IMR-90 (cell line): ENCODE measurements at regions of chr15 and their contacts with region 1.

Region 1: GRCh38 chr15:62389885-62390790 is 225.1 kb upstream of the C2CD4B start:
- DNase-seq: peak; percentile 77
- ATAC-seq: peak; percentile 79
- H3K4me3 ChIP-seq: peak within 1 kb of the TSS; percentile 91
- H3K27ac ChIP-seq: peak within 1 kb of the TSS; percentile 81
- H3K4me1 ChIP-seq: peaks cover 6% of the 10 kb centered on the region
- H3K27me3 ChIP-seq: no peaks in the 10 kb centered on the region
- CTCF ChIP-seq: 0 out of 2 replicates have a peak, but pooled peaks have one; percentile 2
- POLR2A ChIP-seq: peak; percentile 92
- RAD21 ChIP-seq: peak; percentile 39

Region 2: DNA sequence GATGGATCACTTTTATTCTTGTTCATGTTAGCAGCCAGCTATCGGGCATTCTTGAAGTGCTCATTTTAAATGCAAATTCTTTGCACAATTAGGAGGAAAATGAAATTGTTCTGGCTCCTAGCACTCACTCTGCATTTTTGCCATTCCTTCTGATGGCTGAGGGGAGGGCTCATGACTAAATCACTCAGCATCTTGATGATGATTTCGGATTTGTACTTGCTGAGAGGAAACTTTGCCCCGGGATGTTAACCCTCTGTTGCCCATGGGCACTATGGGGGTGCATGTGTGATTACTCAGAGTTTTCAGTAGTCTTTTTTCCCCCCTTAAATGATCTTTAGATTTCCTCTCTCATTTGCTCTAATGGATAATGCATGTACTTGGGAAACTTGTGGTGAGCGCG is 74.6 kb after region 1 on chr15:
- CTCF ChIA-PET with region 1: interaction called, 7 read pairs
- POLR2A ChIA-PET with region 1: no interaction called
- dilution Hi-C with region 1: no loop called
- in situ Hi-C with region 1: no loop called
- intact Hi-C with region 1: loop called (anchors 2 kb)
- DNase-seq: peak; percentile 67
- ATAC-seq: peak; percentile 89
- H3K4me3 ChIP-seq: no peak overlapping the region
- H3K27ac ChIP-seq: no peak overlapping the region
- H3K4me1 ChIP-seq: peaks cover 16% of the 10 kb centered on the region
- H3K27me3 ChIP-seq: no peaks in the 10 kb centered on the region
- CTCF ChIP-seq: no peak
- POLR2A ChIP-seq: no peak
- RAD21 ChIP-seq: no peak

Region 3: DNA sequence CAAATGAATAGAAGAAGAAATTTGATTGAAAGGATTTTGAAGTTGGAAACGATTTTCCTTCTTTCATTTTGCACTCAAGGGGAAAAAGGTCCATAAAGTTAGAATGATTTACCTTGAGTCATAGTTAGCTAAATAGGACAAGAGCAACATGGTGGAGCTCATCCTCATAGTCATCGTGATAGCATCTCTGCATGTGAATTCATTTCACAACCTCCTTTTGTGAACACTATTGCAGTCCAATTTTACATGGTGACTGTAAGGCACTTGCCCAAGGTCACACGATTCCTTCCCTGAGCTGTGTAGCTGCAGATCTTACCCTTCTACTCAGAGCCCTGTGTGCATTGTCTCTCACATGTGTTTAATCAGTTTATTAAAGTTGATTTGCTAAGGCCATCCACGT is 134.7 kb after region 1 on chr15:
- CTCF ChIA-PET with region 1: interaction called, 7 read pairs
- POLR2A ChIA-PET with region 1: no interaction called
- dilution Hi-C with region 1: no loop called
- in situ Hi-C with region 1: no loop called
- intact Hi-C with region 1: loop called (anchors 5 kb)
- DNase-seq: peak; percentile 68
- ATAC-seq: no peak
- H3K4me3 ChIP-seq: no peak overlapping the region
- H3K27ac ChIP-seq: no peak overlapping the region
- H3K4me1 ChIP-seq: peaks cover 17% of the 10 kb centered on the region
- H3K27me3 ChIP-seq: no peaks in the 10 kb centered on the region
- CTCF ChIP-seq: no peak
- POLR2A ChIP-seq: no peak
- RAD21 ChIP-seq: no peak

Region 4: DNA sequence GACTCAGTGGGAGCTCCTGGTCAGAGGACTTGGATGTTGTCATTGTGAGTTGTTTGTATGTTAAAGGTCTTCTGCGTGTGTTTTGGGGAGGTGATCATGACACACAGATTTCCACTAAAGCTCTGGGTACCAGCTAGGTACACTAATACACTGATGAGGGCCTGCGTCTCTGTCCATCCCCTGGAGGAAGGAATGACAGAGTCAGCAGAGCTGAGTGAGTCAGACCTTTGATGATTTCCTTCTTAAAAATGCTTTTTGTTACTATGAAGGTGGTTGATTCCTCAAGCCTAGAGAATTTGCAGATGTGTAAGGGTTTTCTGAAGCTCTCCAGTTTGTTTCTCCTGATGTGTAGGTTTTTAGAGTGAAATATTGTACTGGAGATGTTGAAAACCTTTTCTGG is 228.3 kb after region 1 on chr15:
- CTCF ChIA-PET with region 1: interaction called, 4 read pairs
- POLR2A ChIA-PET with region 1: no interaction called
- dilution Hi-C with region 1: no loop called
- in situ Hi-C with region 1: no loop called
- intact Hi-C with region 1: loop called (anchors 5 kb)
- DNase-seq: peak; percentile 94
- ATAC-seq: peak; percentile 91
- H3K4me3 ChIP-seq: no peak overlapping the region
- H3K27ac ChIP-seq: no peak overlapping the region
- H3K4me1 ChIP-seq: peaks cover 17% of the 10 kb centered on the region
- H3K27me3 ChIP-seq: no peaks in the 10 kb centered on the region
- CTCF ChIP-seq: peak; percentile 65
- POLR2A ChIP-seq: no peak
- RAD21 ChIP-seq: peak; percentile 59

Region 5: DNA sequence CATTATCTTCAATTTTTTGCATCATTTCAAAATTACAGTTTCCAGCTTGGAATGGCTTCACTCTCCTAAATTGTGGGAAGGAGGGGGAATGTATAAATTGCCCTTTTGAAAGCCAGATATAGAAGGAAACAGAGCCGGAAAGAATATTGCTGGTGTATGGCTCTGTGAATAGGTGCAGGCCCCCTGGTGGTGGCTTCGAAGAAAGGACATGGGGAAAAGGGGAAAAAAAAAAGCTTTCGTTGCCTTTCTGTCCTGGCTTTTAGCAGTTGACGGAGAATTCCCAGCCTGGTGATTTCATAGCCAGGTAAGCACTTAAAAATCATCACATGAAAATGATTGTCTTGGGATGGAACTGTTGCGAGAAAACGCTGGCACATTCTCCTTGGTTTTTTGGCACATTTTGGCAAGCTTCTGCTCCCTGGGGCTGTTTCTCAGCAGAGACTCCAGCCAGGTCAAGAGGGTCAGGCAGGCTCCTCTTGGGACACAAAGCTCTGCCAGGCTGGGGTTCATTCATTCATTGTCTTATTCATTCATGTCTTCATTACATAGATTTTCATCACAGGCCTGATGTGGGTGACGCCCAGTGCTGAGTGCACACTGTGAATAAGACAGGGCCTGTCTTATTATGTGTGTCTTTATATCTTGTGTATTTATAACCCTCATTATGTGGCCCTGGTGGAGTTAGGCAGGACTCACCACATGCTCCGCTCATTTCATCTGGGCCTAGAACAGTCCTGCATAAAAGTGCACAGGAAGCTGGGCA is 352.5 kb after region 1 on chr15:
- CTCF ChIA-PET with region 1: interaction called, 4 read pairs
- POLR2A ChIA-PET with region 1: no interaction called
- dilution Hi-C with region 1: no loop called
- in situ Hi-C with region 1: loop called (anchors 10 kb)
- intact Hi-C with region 1: loop called (anchors 1 kb)
- DNase-seq: peak; percentile 90
- ATAC-seq: peak; percentile 81
- H3K4me3 ChIP-seq: no peak overlapping the region
- H3K27ac ChIP-seq: peak overlapping the region; percentile 31; the same call in 1 of the 2 replicates
- H3K4me1 ChIP-seq: peaks cover 17% of the 10 kb centered on the region
- H3K27me3 ChIP-seq: no peaks in the 10 kb centered on the region
- CTCF ChIP-seq: peak; percentile 83
- POLR2A ChIP-seq: no peak
- RAD21 ChIP-seq: peak; percentile 75